AG04450 (cell line): ENCODE measurements at regions of chr19 and their contacts with region 1.

Region 1: DNA sequence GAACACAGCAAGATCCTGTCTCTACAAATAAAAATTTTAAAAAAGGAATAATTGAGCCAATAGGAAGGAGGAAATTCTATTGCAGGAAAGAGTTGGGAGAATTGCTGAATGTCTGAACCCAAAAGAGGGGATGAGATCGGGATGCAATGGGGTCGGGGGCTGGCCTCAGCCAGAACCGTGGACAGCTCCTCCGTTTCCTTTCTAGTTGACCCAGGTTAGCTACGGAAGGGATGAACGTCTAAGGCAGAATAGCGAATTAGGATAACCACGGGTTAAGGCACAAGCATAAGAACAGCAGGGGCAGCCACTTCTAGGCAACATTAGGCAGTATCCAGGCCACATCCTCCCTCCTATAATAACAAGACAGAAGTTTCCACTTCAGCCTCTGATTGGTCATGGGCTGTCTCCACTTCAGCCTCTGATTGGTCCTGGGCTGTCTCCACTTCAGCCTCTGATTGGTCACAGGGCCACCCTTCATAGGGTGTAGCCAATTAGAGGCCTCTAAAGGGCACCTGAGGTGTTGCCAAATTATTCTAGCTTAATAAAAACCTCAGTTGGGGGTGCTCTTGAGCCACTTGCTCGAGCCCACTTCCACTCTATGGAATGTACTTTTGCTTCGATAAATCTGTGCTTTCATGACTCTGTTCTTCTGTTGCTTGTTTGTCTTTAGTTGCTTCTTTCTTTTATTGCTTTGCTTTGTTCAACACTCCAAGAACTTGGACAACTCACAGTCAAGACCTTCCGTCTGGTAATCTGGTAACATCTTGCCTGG is 24.9 kb upstream of the TPM4 start:
- DNase-seq: no peak
- H3K4me3 ChIP-seq: no peak overlapping the region
- H3K27ac ChIP-seq: no peak overlapping the region
- H3K27me3 ChIP-seq: peaks cover 8% of the 10 kb centered on the region
- CTCF ChIP-seq: no peak

Region 2: DNA sequence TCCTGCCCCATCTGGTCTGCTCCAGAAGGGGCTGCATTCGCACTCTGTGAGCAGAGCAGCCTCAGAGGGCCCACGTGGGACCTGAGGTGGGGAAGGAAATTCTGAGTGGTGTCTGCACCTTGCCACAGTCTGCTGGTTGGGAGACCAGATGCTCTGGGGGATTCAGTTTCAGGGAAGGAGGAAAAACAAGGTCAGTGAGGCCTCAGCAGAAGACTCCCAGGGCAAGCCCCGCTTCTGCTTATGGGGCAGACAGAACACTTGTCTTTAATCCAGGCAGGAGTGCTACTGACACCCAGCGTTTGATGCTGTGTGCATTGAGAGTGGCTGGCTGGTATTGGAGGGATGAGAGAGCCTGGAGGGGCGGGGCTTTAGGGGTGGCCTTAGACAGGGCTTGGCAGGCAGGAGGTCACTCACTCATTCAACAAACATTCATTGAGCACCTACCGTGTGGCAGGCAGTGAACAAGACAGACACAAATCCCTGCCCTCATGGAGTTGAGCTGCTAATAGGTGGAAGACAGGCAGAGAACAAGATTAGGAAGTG is 1473.5 kb before region 1 on chr19:
- CTCF ChIA-PET with region 1: no interaction called
- POLR2A ChIA-PET with region 1: no interaction called
- DNase-seq: no peak
- H3K4me3 ChIP-seq: no peak overlapping the region
- H3K27ac ChIP-seq: no peak overlapping the region
- H3K27me3 ChIP-seq: no peaks in the 10 kb centered on the region
- CTCF ChIP-seq: no peak

Region 3: GRCh38 chr19:16062789-16063188 is 11.3 kb after region 1 on chr19:
- CTCF ChIA-PET with region 1: interaction called, 11 read pairs
- POLR2A ChIA-PET with region 1: no interaction called
- DNase-seq: no peak
- H3K4me3 ChIP-seq: no peak overlapping the region
- H3K27ac ChIP-seq: no peak overlapping the region
- H3K27me3 ChIP-seq: no peaks in the 10 kb centered on the region
- CTCF ChIP-seq: peak; percentile 93

Region 4: DNA sequence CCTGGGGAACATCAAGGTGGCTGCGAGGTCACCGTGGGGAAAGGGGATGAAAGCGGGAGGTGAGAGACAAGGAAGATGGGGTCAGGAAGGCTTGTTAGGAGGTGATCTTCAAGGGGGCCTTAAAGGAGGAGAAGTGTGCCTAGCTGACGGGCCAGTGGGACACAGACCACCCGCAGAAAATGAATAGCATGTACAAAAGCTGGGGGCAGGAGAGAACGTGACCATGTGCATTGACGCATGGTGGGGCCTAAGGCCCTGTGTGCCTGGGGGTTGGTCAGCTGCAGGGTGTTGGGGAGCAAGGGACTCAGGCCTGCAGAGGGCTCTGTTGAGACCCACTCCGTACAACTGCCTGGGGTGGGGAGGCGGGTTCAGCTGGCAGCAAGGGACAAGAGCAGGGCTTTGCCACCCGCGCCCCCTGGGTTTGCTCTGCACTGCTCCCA is 66.2 kb after region 1 on chr19:
- CTCF ChIA-PET with region 1: no interaction called
- POLR2A ChIA-PET with region 1: no interaction called
- DNase-seq: no peak
- H3K4me3 ChIP-seq: no peak overlapping the region
- H3K27ac ChIP-seq: no peak overlapping the region
- H3K27me3 ChIP-seq: no peaks in the 10 kb centered on the region
- CTCF ChIP-seq: 0 out of 2 replicates have a peak, but pooled peaks have one; percentile 5

Region 5: GRCh38 chr19:16153582-16154336 is 102.3 kb after region 1 on chr19:
- CTCF ChIA-PET with region 1: no interaction called
- POLR2A ChIA-PET with region 1: no interaction called
- DNase-seq: no peak
- H3K4me3 ChIP-seq: no peak overlapping the region
- H3K27ac ChIP-seq: no peak overlapping the region
- H3K27me3 ChIP-seq: peaks cover 3% of the 10 kb centered on the region
- CTCF ChIP-seq: no peak